ENCODE measurements at regions of chr15 and their contacts with region 1.

Region 1: DNA sequence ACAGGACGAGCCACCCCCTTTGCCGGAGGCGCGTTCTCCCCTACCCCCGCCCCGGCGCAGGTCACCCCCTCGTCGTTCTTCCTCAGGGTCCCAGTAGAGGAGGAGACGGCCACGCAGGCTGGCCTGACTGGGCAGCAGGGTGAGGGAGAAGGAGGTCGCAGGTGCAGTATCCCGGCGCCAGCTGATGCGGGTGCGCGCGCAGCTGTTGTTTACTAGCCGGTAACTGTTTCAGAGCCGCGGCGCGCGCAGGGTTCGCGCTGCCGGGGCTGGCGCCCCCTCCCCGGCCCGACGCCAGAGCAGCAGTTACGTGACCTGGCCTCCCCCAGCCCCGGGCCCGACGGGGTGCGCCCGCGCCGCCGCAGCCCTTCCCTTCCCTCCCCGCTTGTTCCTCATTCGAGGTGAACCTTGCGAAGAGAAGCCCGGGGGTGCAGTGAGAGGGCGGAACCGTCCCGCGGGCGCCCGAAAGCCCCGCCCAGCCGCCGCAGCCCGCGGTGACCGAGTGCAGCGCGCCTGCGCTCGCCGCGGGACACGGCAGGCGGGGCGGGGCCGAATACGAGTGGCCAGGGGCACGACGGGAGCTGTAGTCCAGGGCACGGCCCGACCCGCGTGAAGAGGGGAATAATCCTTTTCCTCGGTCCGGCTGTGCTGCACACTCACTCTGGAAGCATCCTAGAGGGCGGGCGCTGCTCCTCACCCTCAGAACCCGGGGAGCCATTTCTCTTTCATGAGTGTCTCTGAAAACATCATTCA is at the start of gene SLC12A6:
- DNase-seq: peak; percentile 84 to 90
- ATAC-seq: peak; percentile 93 to 94
- H3K4me3 ChIP-seq: peak within 1 kb of the TSS; percentile 75 to 91 (median 86)
- H3K27ac ChIP-seq: peak within 1 kb of the TSS; percentile 90 to 96 (median 92)
- H3K4me1 ChIP-seq: peaks cover 43 to 44% of the 10 kb centered on the region in 2 donors
- H3K27me3 ChIP-seq: no peaks in the 10 kb centered on the region
- CTCF ChIP-seq: no peak
- POLR2A ChIP-seq: peak; percentile 70 to 86
- total RNA-seq, gene SLC12A6: 17.3 to 25.4 (median 19.5) TPM

Region 2: DNA sequence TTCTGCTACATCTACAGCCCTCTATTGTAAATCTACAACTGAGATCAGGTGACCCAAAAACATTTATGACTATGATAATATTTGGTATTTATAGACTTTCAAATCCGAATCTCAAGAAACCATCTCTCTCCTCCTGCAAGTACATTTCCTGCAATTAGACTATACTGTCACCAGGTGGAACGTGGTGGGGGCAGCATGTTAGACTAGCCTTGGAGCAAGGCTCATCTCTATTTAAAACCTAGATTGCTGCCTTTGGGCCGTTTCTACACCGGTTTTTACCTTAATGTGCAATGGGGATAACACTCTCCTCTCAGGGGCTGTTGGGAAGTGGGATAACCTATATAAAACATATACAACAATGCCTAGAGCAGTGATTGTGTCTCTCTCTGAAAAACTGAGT is 124.0 kb before region 1 on chr15:
- in situ Hi-C with region 1: no loop called
- intact Hi-C with region 1: no loop called
- DNase-seq: no peak
- ATAC-seq: no peak
- H3K4me3 ChIP-seq: no peak overlapping the region
- H3K27ac ChIP-seq: no peak overlapping the region
- H3K4me1 ChIP-seq: peaks cover 5% of the 10 kb centered on the region in 2 donors
- H3K27me3 ChIP-seq: no peaks in the 10 kb centered on the region
- CTCF ChIP-seq: no peak
- POLR2A ChIP-seq: no peak

Region 3: DNA sequence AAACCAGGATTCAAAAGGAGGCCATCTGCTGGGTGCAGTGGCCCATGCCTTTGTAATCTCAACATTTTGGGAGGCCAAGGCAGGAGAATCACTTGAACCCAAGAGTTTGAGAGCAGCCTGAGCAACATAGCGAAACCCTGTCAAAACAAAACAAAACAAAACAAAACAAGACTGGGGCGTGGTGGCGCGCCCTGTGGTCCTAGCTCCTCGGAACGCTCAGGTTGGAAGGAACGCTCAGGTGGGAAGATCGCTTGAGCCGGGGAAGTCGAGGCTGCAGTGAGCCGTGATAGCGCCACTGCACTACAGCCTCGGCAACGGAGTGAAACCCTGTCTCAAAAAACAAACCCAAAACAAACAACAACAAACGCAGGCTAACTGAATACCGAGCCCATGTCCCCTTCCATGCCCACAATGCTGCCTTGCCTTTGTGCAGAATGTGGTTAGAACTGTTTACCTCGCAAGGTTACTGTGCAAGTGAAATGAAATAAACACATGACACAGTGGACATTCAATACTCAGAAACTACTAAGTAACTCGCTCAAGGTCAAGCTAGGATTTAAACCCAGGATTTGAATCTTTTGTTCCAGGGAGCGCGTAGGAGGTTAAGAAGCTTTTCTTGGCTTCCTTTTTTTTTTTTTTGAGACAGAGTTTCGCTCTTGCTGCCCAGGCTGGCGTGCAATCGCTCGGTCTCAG is 113.7 kb before region 1 on chr15:
- in situ Hi-C with region 1: no loop called
- intact Hi-C with region 1: loop called (anchors 5 kb)
- DNase-seq: no peak
- ATAC-seq: peak; percentile 34 to 45
- H3K4me3 ChIP-seq: peak overlapping the region; percentile 75 to 93 (median 86)
- H3K27ac ChIP-seq: peak overlapping the region; percentile 83 to 96 (median 87)
- H3K4me1 ChIP-seq: peaks cover 14 to 15% of the 10 kb centered on the region in 2 donors
- H3K27me3 ChIP-seq: no peaks in the 10 kb centered on the region
- CTCF ChIP-seq: no peak
- POLR2A ChIP-seq: no peak

Region 4: DNA sequence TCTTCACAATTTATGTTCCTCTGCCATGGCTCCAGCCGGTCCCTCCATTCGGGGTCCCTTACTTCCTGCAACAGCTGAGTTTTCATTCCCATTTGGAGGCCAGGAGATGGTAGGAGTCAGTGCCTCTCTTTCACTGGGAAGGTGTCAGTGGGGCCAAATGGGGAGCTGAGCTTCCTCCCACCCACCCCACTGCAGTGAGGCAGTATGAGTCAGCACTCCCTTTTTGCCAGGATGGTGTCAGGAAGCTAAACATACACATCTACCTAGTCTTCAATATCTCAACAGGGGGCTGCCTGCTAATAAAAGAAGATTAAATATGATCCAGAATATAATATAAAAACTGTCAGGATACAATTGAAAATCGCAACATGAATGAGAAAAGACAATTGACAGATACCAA is 470.3 kb after region 1 on chr15:
- in situ Hi-C with region 1: no loop called
- intact Hi-C with region 1: no loop called
- DNase-seq: no peak
- ATAC-seq: no peak
- H3K4me3 ChIP-seq: no peak overlapping the region
- H3K27ac ChIP-seq: no peak overlapping the region
- H3K4me1 ChIP-seq: peaks cover 0 to 8% of the 10 kb centered on the region in 2 donors
- H3K27me3 ChIP-seq: no peaks in the 10 kb centered on the region
- CTCF ChIP-seq: no peak
- POLR2A ChIP-seq: no peak

Region 5: GRCh38 chr15:34953851-34954250 is 616.1 kb after region 1 on chr15:
- in situ Hi-C with region 1: no loop called
- intact Hi-C with region 1: no loop called
- DNase-seq: no peak
- ATAC-seq: no peak
- H3K4me3 ChIP-seq: no peak overlapping the region
- H3K27ac ChIP-seq: no peak overlapping the region
- H3K4me1 ChIP-seq: no peaks in the 10 kb centered on the region
- H3K27me3 ChIP-seq: no peaks in the 10 kb centered on the region
- CTCF ChIP-seq: no peak
- POLR2A ChIP-seq: no peak

Measured in gastrocnemius medialis (tissue), 4 donors.